ENCODE measurements at regions of chr2 and their contacts with region 1.

Region 1: GRCh38 chr2:69811018-69811417 is 18.4 kb upstream of the GMCL1 start:
- DNase-seq: no peak
- CTCF ChIP-seq: no peak

Region 2: GRCh38 chr2:69734854-69735574 is 76.0 kb before region 1 on chr2:
- in situ Hi-C with region 1: loop called (anchors 5 kb)
- DNase-seq: no peak
- CTCF ChIP-seq: no peak